ENCODE measurements at regions of chr10 and their contacts with region 1.

Region 1: GRCh38 chr10:76303682-76304316 is 872.4 kb downstream of the LRMDA start:
- DNase-seq: peak in 4 of 9 donors; percentile 3 to 35 (median 13)
- ATAC-seq: peak; percentile 54
- H3K4me3 ChIP-seq: no peak overlapping the region
- H3K4me3 Mint-ChIP-seq: no peak overlapping the region
- H3K27ac ChIP-seq: no peak overlapping the region
- H3K27ac Mint-ChIP-seq: no peak overlapping the region
- H3K4me1 ChIP-seq: no peaks in the 10 kb centered on the region
- H3K4me1 Mint-ChIP-seq: peaks cover 0 to 13% (median 0%) of the 10 kb centered on the region in 7 donors
- H3K27me3 ChIP-seq: no peaks in the 10 kb centered on the region
- H3K27me3 Mint-ChIP-seq: peaks cover 0 to 14% (median 4%) of the 10 kb centered on the region in 5 donors

Region 2: GRCh38 chr10:76106611-76107010 is 197.2 kb before region 1 on chr10:
- CTCF ChIA-PET with region 1: no interaction called
- POLR2A ChIA-PET with region 1: no interaction called
- intact Hi-C with region 1: loop called in 1 of 2 experiments (anchors 2 kb)
- DNase-seq: no peak
- ATAC-seq: no peak
- H3K4me3 ChIP-seq: no peak overlapping the region
- H3K4me3 Mint-ChIP-seq: no peak overlapping the region
- H3K27ac ChIP-seq: no peak overlapping the region
- H3K27ac Mint-ChIP-seq: no peak overlapping the region
- H3K4me1 ChIP-seq: no peaks in the 10 kb centered on the region
- H3K4me1 Mint-ChIP-seq: peaks cover 0 to 9% (median 0%) of the 10 kb centered on the region in 7 donors
- H3K27me3 ChIP-seq: no peaks in the 10 kb centered on the region
- H3K27me3 Mint-ChIP-seq: peaks cover 0 to 5% (median 0%) of the 10 kb centered on the region in 5 donors

Region 3: GRCh38 chr10:76428551-76429367 is 125.0 kb after region 1 on chr10:
- CTCF ChIA-PET with region 1: no interaction called
- POLR2A ChIA-PET with region 1: no interaction called
- intact Hi-C with region 1: no loop called
- DNase-seq: no peak
- ATAC-seq: no peak
- H3K4me3 ChIP-seq: no peak overlapping the region
- H3K4me3 Mint-ChIP-seq: no peak overlapping the region
- H3K27ac ChIP-seq: no peak overlapping the region
- H3K27ac Mint-ChIP-seq: no peak overlapping the region
- H3K4me1 ChIP-seq: no peaks in the 10 kb centered on the region
- H3K4me1 Mint-ChIP-seq: no peaks in the 10 kb centered on the region
- H3K27me3 ChIP-seq: no peaks in the 10 kb centered on the region
- H3K27me3 Mint-ChIP-seq: peaks cover 0 to 6% (median 0%) of the 10 kb centered on the region in 5 donors

Measured in naive thymus-derived CD4-positive, alpha-beta T cell (primary cell).